ENCODE measurements at regions of chr2 and their contacts with region 1.

Region 1: GRCh38 chr2:192162392-192163042 is 32.2 kb downstream of the TMEFF2 start:
- DNase-seq: peak; percentile 23 to 74 (median 64)
- ATAC-seq: peak; percentile 49
- H3K4me3 ChIP-seq: no peak overlapping the region
- H3K4me3 Mint-ChIP-seq: peak overlapping the region; percentile 4
- H3K27ac ChIP-seq: no peak overlapping the region
- H3K27ac Mint-ChIP-seq: no peak overlapping the region
- H3K4me1 ChIP-seq: peaks cover 4% of the 10 kb centered on the region
- H3K4me1 Mint-ChIP-seq: peaks cover 9% of the 10 kb centered on the region
- H3K27me3 ChIP-seq: no peaks in the 10 kb centered on the region
- H3K27me3 Mint-ChIP-seq: peaks cover 11% of the 10 kb centered on the region
- CTCF ChIP-seq: peak; percentile 89

Region 2: GRCh38 chr2:191066197-191066918 is 1096.2 kb before region 1 on chr2:
- CTCF ChIA-PET with region 1: no interaction called
- POLR2A ChIA-PET with region 1: no interaction called
- intact Hi-C with region 1: loop called in 1 of 2 experiments (anchors 10 kb)
- DNase-seq: peak in 1 of 9 experiments; percentile 46
- ATAC-seq: no peak
- H3K4me3 ChIP-seq: peak overlapping the region in 1 of 2 experiments; percentile 48
- H3K4me3 Mint-ChIP-seq: peak overlapping the region; percentile 75
- H3K27ac ChIP-seq: peak overlapping the region; percentile 4 to 62
- H3K27ac Mint-ChIP-seq: peak overlapping the region; percentile 86
- H3K4me1 ChIP-seq: peaks cover 76% of the 10 kb centered on the region
- H3K4me1 Mint-ChIP-seq: peaks cover 84% of the 10 kb centered on the region
- H3K27me3 ChIP-seq: no peaks in the 10 kb centered on the region
- H3K27me3 Mint-ChIP-seq: no peaks in the 10 kb centered on the region
- CTCF ChIP-seq: no peak

Region 3: GRCh38 chr2:191566344-191566743 is 596.2 kb before region 1 on chr2:
- CTCF ChIA-PET with region 1: interaction called, 134 read pairs
- POLR2A ChIA-PET with region 1: no interaction called
- intact Hi-C with region 1: loop called in 1 of 2 experiments (anchors 1 kb)
- DNase-seq: peak; percentile 33 to 81 (median 72)
- ATAC-seq: peak; percentile 55
- H3K4me3 ChIP-seq: no peak overlapping the region
- H3K4me3 Mint-ChIP-seq: no peak overlapping the region
- H3K27ac ChIP-seq: no peak overlapping the region
- H3K27ac Mint-ChIP-seq: no peak overlapping the region
- H3K4me1 ChIP-seq: peaks cover 11% of the 10 kb centered on the region
- H3K4me1 Mint-ChIP-seq: peaks cover 18% of the 10 kb centered on the region
- H3K27me3 ChIP-seq: peaks cover 0 to 12% of the 10 kb centered on the region in 2 experiments
- H3K27me3 Mint-ChIP-seq: peaks cover 29% of the 10 kb centered on the region
- CTCF ChIP-seq: peak; percentile 80

Region 4: GRCh38 chr2:191758518-191759507 is 403.7 kb before region 1 on chr2:
- CTCF ChIA-PET with region 1: interaction called, 9 read pairs
- POLR2A ChIA-PET with region 1: no interaction called
- intact Hi-C with region 1: loop called in 1 of 2 experiments (anchors 2 kb)
- DNase-seq: peak; percentile 6 to 67 (median 45)
- ATAC-seq: peak; percentile 74
- H3K4me3 ChIP-seq: no peak overlapping the region
- H3K4me3 Mint-ChIP-seq: no peak overlapping the region
- H3K27ac ChIP-seq: no peak overlapping the region
- H3K27ac Mint-ChIP-seq: no peak overlapping the region
- H3K4me1 ChIP-seq: peaks cover 4% of the 10 kb centered on the region
- H3K4me1 Mint-ChIP-seq: peaks cover 3% of the 10 kb centered on the region
- H3K27me3 ChIP-seq: no peaks in the 10 kb centered on the region
- H3K27me3 Mint-ChIP-seq: peaks cover 15% of the 10 kb centered on the region
- CTCF ChIP-seq: peak; percentile 46

Region 5: GRCh38 chr2:192151853-192152252 is 10.7 kb before region 1 on chr2:
- CTCF ChIA-PET with region 1: interaction called, 14 read pairs
- POLR2A ChIA-PET with region 1: no interaction called
- intact Hi-C with region 1: no loop called
- DNase-seq: no peak
- ATAC-seq: no peak
- H3K4me3 ChIP-seq: no peak overlapping the region
- H3K4me3 Mint-ChIP-seq: no peak overlapping the region
- H3K27ac ChIP-seq: no peak overlapping the region
- H3K27ac Mint-ChIP-seq: no peak overlapping the region
- H3K4me1 ChIP-seq: no peaks in the 10 kb centered on the region
- H3K4me1 Mint-ChIP-seq: no peaks in the 10 kb centered on the region
- H3K27me3 ChIP-seq: no peaks in the 10 kb centered on the region
- H3K27me3 Mint-ChIP-seq: peaks cover 5% of the 10 kb centered on the region
- CTCF ChIP-seq: no peak

Region 6: DNA sequence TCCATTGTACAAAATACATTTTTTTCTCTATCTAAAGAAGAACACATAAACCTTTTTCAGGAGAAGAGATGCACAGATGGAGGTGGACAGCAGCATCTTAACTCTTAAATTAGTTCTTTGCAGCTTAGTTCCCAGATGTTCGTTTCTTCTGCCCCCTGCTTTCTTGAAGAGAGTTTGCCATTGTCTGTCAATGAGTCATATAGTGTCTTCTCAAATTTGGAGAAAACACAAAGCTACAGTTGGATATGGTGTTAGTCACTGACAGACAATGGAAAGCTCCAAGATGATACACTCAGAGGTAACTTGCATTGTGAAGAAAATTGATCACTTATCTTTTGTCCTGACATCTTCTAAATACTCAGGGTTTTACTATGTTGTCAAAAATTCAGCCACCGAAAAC is 81.0 kb after region 1 on chr2:
- CTCF ChIA-PET with region 1: no interaction called
- POLR2A ChIA-PET with region 1: no interaction called
- intact Hi-C with region 1: no loop called
- DNase-seq: no peak
- ATAC-seq: no peak
- H3K4me3 ChIP-seq: no peak overlapping the region
- H3K4me3 Mint-ChIP-seq: no peak overlapping the region
- H3K27ac ChIP-seq: no peak overlapping the region
- H3K27ac Mint-ChIP-seq: no peak overlapping the region
- H3K4me1 ChIP-seq: no peaks in the 10 kb centered on the region
- H3K4me1 Mint-ChIP-seq: no peaks in the 10 kb centered on the region
- H3K27me3 ChIP-seq: no peaks in the 10 kb centered on the region
- H3K27me3 Mint-ChIP-seq: peaks cover 4% of the 10 kb centered on the region
- CTCF ChIP-seq: no peak